CD4-positive, alpha-beta T cell (primary cell): ENCODE measurements at regions of chr22 and their contacts with region 1.

Region 1: GRCh38 chr22:50562523-50563412 is at the start of gene SYCE3:
- DNase-seq: peak; percentile 93 to 99 (median 96)
- ATAC-seq: peak; percentile 94
- H3K4me3 ChIP-seq: peak within 1 kb of the TSS; percentile 84
- H3K4me3 Mint-ChIP-seq: peak within 1 kb of the TSS; percentile 96
- H3K27ac ChIP-seq: no peak within 1 kb of the TSS
- H3K27ac Mint-ChIP-seq: peak within 1 kb of the TSS; percentile 85
- H3K4me1 ChIP-seq: peaks cover 10% of the 10 kb centered on the region
- H3K4me1 Mint-ChIP-seq: peaks cover 16% of the 10 kb centered on the region
- H3K27me3 ChIP-seq: no peaks in the 10 kb centered on the region
- H3K27me3 Mint-ChIP-seq: no peaks in the 10 kb centered on the region
- CTCF ChIP-seq: peak; percentile 84
- total RNA-seq, gene SYCE3: not detected

Region 2: GRCh38 chr22:50537765-50538164 is 25.0 kb before region 1 on chr22:
- CTCF ChIA-PET with region 1: interaction called, 31 read pairs
- POLR2A ChIA-PET with region 1: interaction called, 28 read pairs
- intact Hi-C with region 1: no loop called
- DNase-seq: no peak
- ATAC-seq: no peak
- H3K4me3 ChIP-seq: no peak overlapping the region
- H3K4me3 Mint-ChIP-seq: no peak overlapping the region
- H3K27ac ChIP-seq: peak overlapping the region; percentile 92 to 99
- H3K27ac Mint-ChIP-seq: peak overlapping the region; percentile 99
- H3K4me1 ChIP-seq: peaks cover 51% of the 10 kb centered on the region
- H3K4me1 Mint-ChIP-seq: peaks cover 43% of the 10 kb centered on the region
- H3K27me3 ChIP-seq: no peaks in the 10 kb centered on the region
- H3K27me3 Mint-ChIP-seq: peaks cover 9% of the 10 kb centered on the region
- CTCF ChIP-seq: no peak

Region 3: DNA sequence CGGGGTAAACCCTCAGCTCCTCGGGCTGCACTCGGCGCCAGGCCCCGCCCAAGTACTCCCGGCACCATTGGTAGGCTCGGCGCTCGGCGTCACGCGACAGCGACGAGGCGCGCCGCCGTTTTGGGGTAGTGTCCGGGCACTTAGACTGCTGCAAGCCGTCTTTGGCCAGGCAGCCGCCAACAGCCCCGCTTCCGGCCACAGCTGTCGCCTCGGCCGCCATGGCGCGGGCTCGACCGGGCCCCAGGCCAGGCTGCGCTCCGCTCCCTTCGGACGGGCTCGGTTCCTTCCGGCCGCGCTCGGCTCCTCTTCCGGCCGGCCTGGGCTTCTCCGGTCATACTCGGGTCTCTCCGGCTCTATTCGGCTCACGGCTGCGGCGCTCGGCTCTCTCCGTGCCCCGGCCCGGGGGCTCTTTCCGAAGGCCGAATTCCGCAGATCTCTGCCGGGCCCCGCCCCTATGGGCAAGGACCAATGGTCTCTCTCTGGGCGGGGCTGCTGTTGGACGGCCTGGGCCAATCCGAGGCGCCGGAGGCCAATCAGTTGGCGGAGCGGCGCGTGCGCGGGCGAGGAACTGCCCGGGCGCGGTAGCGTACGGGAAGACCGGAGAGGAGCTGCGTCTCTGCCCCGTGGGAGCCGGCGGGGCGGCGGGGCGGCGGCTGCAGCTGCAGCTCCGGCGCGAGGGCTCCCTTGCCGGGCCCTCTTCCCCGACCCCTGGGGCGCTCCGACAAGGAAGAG is 20.0 kb after region 1 on chr22 and contains the start of gene CHKB:
- CTCF ChIA-PET with region 1: interaction called, 5 read pairs
- POLR2A ChIA-PET with region 1: interaction called, 17 read pairs
- intact Hi-C with region 1: loop called (anchors 1 to 2 kb)
- DNase-seq: peak; percentile 95 to 99 (median 98)
- ATAC-seq: peak; percentile 92
- H3K4me3 ChIP-seq: peak within 1 kb of the TSS; percentile 63
- H3K4me3 Mint-ChIP-seq: peak within 1 kb of the TSS; percentile 100
- H3K27ac ChIP-seq: peak within 1 kb of the TSS; percentile 91 to 95
- H3K27ac Mint-ChIP-seq: peak within 1 kb of the TSS; percentile 98
- H3K4me1 ChIP-seq: peaks cover 31% of the 10 kb centered on the region
- H3K4me1 Mint-ChIP-seq: peaks cover 35% of the 10 kb centered on the region
- H3K27me3 ChIP-seq: no peaks in the 10 kb centered on the region
- H3K27me3 Mint-ChIP-seq: no peaks in the 10 kb centered on the region
- CTCF ChIP-seq: no peak
- total RNA-seq, gene CHKB: 152 to 156 TPM